Activated CD4-positive, alpha-beta T cell treated with anti-CD3 and anti-CD28 coated beads, Interleukin-2, amount 10 ng/mL, durations not matched to agents 24 days and 14 days (primary cell): ENCODE measurements at regions of chr7 and their contacts with region 1.

Region 1: DNA sequence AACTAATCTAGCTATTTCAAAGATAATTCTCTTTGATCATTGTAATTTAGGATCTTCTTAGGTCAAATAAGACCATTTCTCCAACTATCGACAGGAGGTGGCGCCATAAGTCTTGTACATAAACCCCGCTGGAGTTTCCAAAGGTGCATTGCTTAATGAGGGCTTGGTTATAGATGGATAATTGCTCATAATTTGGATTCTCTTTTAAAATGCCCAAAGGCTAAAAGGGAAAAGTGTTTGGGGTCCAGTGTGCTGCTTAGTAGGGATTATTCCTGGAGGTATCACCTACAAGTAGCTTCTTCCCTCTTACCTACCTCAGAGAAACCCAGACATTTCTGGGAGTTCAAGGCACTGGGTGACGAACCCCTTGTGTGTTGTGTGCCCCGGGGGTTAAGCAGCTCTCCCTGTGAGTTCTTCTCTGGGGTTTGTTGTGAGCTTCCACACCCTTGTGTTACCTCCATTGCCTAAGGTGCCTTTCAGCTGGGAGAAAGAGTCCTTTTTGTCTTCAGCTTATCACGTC is 75.2 kb downstream of the PAXIP1 start:
- DNase-seq: peak; percentile 92
- H3K4me3 Mint-ChIP-seq: peak overlapping the region; percentile 96
- H3K27ac Mint-ChIP-seq: peak overlapping the region; percentile 96
- H3K4me1 Mint-ChIP-seq: peaks cover 20% of the 10 kb centered on the region
- H3K27me3 Mint-ChIP-seq: peaks cover 25% of the 10 kb centered on the region

Region 2: GRCh38 chr7:154698726-154699291 is 228.9 kb before region 1 on chr7:
- intact Hi-C with region 1: no loop called
- DNase-seq: peak; percentile 56
- H3K4me3 Mint-ChIP-seq: no peak overlapping the region
- H3K27ac Mint-ChIP-seq: no peak overlapping the region
- H3K4me1 Mint-ChIP-seq: no peaks in the 10 kb centered on the region
- H3K27me3 Mint-ChIP-seq: no peaks in the 10 kb centered on the region

Region 3: GRCh38 chr7:154913638-154914312 is 13.9 kb before region 1 on chr7:
- intact Hi-C with region 1: loop called (anchors 2 kb)
- DNase-seq: peak; percentile 96
- H3K4me3 Mint-ChIP-seq: peak overlapping the region; percentile 82
- H3K27ac Mint-ChIP-seq: peak overlapping the region; percentile 37
- H3K4me1 Mint-ChIP-seq: peaks cover 4% of the 10 kb centered on the region
- H3K27me3 Mint-ChIP-seq: peaks cover 9% of the 10 kb centered on the region

Region 4: GRCh38 chr7:155003376-155004214 is 75.9 kb after region 1 on chr7:
- intact Hi-C with region 1: loop called (anchors 1 kb)
- DNase-seq: peak; percentile 94
- H3K4me3 Mint-ChIP-seq: peak overlapping the region; percentile 94
- H3K27ac Mint-ChIP-seq: peak overlapping the region; percentile 94
- H3K4me1 Mint-ChIP-seq: peaks cover 9% of the 10 kb centered on the region
- H3K27me3 Mint-ChIP-seq: no peaks in the 10 kb centered on the region

Region 5: DNA sequence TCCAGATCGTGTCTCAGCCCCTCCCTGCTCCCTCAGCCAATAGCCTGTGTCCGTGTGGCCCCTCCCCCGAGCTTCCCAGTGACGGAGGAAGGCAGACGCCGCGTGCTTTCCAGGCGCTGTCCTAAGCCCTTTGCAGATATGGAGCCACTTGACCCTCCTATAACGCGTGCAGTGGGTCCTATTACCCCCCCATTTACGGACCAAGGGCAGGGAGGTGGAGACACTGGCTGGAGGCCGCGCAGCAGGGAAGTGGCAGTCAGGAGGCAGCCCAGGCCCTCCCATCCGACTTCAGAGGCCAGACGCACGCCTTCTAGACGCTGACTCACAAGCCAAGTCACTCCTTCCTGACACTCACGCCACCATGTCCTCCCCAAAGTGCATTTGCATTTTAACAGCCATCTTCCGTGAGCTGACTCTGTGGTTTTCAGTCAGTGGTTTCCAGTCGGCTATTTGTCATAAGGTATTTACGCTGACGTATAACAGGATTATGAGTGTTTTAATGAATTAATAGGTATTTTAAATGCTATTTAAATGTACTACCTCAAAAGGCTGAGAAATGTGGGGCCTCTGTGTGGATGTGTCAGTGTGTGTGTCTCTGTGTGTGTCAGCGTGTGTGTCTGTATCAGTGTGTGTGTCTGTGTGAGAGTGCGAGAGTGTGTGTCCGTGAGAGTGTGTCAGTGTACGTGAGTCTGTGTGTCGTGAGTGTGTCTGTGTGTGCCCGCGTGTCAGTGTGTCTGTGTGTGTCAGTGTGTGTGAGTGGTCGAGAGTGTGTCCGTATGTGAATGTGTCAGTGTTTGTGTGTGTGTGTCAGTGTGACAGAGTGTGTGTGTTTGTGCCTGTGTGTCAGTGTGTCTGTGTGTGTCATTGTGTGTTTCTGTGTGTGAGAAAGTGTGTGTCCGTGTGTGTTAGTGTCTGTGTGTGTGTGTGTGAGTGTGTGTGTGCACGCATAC is 278.0 kb after region 1 on chr7:
- intact Hi-C with region 1: loop called (anchors 1 kb)
- DNase-seq: peak; percentile 96
- H3K4me3 Mint-ChIP-seq: peak overlapping the region; percentile 85
- H3K27ac Mint-ChIP-seq: peak overlapping the region; percentile 96
- H3K4me1 Mint-ChIP-seq: peaks cover 34% of the 10 kb centered on the region
- H3K27me3 Mint-ChIP-seq: no peaks in the 10 kb centered on the region

Region 6: DNA sequence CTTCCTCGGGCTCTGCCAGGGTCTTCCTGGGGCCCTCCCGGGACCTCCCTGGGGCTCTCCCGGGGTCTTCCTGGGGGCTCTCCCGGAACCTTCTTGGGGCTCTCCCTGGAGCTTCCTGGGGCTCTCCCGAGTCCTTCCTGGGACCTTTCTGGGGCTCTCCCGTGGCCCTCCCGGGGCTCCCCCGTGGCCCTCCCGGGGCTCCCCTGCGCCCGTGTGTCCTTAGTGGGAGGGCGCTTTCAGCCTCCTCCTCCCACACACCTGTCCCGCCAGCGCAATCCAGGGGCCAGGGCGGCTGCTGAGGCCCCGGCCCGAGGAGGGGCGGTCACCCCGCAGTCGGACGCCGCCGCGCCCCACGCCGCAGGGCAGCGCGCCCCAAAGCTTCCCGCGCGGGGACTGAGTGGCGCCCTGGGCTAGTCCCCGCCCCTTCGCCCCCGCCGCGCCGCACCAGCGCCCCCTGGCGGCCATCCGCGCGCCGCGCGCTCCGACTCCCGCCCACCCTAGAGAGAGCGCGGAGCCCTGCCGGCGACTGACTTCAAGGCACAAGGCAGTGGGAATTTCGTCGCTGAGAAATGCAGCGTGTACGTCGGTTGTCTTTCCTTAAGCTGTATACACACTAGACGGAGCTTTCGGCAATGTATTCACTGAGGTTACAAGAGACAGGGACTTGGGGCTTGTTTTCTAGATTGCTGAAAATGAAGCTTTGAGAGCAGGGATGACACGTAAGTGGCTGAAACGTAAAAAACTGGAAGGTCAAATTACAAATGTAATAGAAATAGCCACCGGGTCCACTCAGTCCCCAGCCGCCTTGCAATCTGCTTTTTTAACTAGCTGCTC is 417.1 kb after region 1 on chr7:
- intact Hi-C with region 1: loop called (anchors 1 kb)
- DNase-seq: peak; percentile 96
- H3K4me3 Mint-ChIP-seq: peak overlapping the region; percentile 80
- H3K27ac Mint-ChIP-seq: no peak overlapping the region
- H3K4me1 Mint-ChIP-seq: peaks cover 11% of the 10 kb centered on the region
- H3K27me3 Mint-ChIP-seq: peaks cover 29% of the 10 kb centered on the region

Region 7: DNA sequence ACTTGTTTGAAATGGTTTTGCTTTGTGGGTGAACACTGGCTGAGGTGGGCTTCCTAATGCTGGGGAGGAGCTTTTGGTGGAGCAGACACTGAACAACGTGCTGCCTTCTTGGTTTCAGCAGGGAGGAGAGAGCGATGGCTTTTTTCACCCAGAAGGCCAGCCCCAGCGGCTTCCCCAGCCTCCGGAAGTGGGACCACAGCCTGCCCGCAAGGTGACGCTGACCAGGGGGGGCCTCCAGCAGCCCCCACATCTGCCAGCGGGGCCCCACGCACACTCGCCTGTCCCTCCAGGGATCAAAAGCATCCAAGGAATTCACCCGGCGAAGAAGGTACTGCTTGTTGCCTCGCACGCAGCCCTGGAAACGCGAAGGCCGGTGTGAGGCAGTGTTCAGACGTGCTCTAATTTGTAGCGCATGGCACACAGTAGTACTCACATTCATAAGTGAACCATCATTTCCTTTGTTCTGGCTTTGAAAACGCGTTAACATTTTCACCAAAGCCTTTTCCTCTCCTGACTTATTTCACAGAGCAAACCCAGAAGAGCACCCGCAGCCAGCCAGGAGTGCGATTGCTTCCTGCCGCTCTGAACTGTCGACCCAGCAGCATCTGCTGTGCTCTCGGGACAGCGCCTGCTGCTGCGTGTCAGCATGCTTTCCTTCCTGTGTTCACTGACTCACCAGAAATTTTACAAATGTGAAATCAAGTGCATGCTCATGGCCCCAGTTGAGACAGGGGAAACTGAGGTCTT is 836.2 kb after region 1 on chr7:
- intact Hi-C with region 1: loop called (anchors 10 kb)
- DNase-seq: peak; percentile 91
- H3K4me3 Mint-ChIP-seq: peak overlapping the region; percentile 83
- H3K27ac Mint-ChIP-seq: peak overlapping the region; percentile 99
- H3K4me1 Mint-ChIP-seq: peaks cover 67% of the 10 kb centered on the region
- H3K27me3 Mint-ChIP-seq: no peaks in the 10 kb centered on the region